Activated CD8-positive, alpha-beta T cell treated with anti-CD3 and anti-CD28 coated beads for 36 hours (primary cell): ENCODE measurements at regions of chr19 and their contacts with region 1.

Region 1: GRCh38 chr19:13172068-13172896 is 22.1 kb downstream of the IER2 start:
- DNase-seq: peak; percentile 93
- ATAC-seq: peak; percentile 17
- H3K4me3 Mint-ChIP-seq: peak overlapping the region; percentile 90
- H3K27ac Mint-ChIP-seq: peak overlapping the region; percentile 98
- H3K4me1 Mint-ChIP-seq: peaks cover 52% of the 10 kb centered on the region
- H3K27me3 Mint-ChIP-seq: no peaks in the 10 kb centered on the region
- CTCF ChIP-seq: no peak

Region 2: GRCh38 chr19:13155472-13156359 is 16.6 kb before region 1 on chr19:
- CTCF ChIA-PET with region 1: interaction called, 37 read pairs
- POLR2A ChIA-PET with region 1: interaction called, 226 read pairs
- intact Hi-C with region 1: no loop called
- DNase-seq: peak; percentile 88
- ATAC-seq: peak; percentile 9
- H3K4me3 Mint-ChIP-seq: peak overlapping the region; percentile 83
- H3K27ac Mint-ChIP-seq: peak overlapping the region; percentile 100
- H3K4me1 Mint-ChIP-seq: peaks cover 36% of the 10 kb centered on the region
- H3K27me3 Mint-ChIP-seq: no peaks in the 10 kb centered on the region
- CTCF ChIP-seq: no peak